Activated B cell treated with CpG ODN at 0.5 μM for 24 hours (primary cell): ENCODE measurements at regions of chr4 and their contacts with region 1.

Region 1: GRCh38 chr4:6783053-6783981 is 790 bp downstream of the KIAA0232 start:
- DNase-seq: peak; percentile 88
- ATAC-seq: peak; percentile 67
- H3K4me3 Mint-ChIP-seq: peak overlapping the region; percentile 84
- H3K27ac Mint-ChIP-seq: peak overlapping the region; percentile 78
- H3K4me1 Mint-ChIP-seq: peaks cover 22% of the 10 kb centered on the region
- H3K27me3 Mint-ChIP-seq: no peaks in the 10 kb centered on the region
- CTCF ChIP-seq: no peak

Region 2: GRCh38 chr4:6574747-6575502 is 208.4 kb before region 1 on chr4 and contains the start of gene MAN2B2:
- CTCF ChIA-PET with region 1: no interaction called
- POLR2A ChIA-PET with region 1: interaction called, 7 read pairs
- intact Hi-C with region 1: loop called (anchors 2 kb)
- DNase-seq: peak; percentile 86
- ATAC-seq: peak; percentile 96
- H3K4me3 Mint-ChIP-seq: peak within 1 kb of the TSS; percentile 88
- H3K27ac Mint-ChIP-seq: peak within 1 kb of the TSS; percentile 74
- H3K4me1 Mint-ChIP-seq: peaks cover 14% of the 10 kb centered on the region
- H3K27me3 Mint-ChIP-seq: no peaks in the 10 kb centered on the region
- CTCF ChIP-seq: no peak
- total RNA-seq, gene MAN2B2: 24.2 and 24.7 TPM in 2 replicates

Region 3: GRCh38 chr4:6709230-6710114 is 73.8 kb before region 1 on chr4 and contains the start of gene MRFAP1L1:
- CTCF ChIA-PET with region 1: no interaction called
- POLR2A ChIA-PET with region 1: interaction called, 9 read pairs
- intact Hi-C with region 1: loop called (anchors 1 kb)
- DNase-seq: peak; percentile 93
- ATAC-seq: peak; percentile 84
- H3K4me3 Mint-ChIP-seq: peak within 1 kb of the TSS; percentile 99
- H3K27ac Mint-ChIP-seq: peak within 1 kb of the TSS; percentile 96
- H3K4me1 Mint-ChIP-seq: peaks cover 64% of the 10 kb centered on the region
- H3K27me3 Mint-ChIP-seq: peaks cover 3% of the 10 kb centered on the region
- CTCF ChIP-seq: no peak
- total RNA-seq, gene MRFAP1L1: 39.1 and 39.5 TPM in 2 replicates

Region 4: GRCh38 chr4:6873792-6874461 is 90.6 kb after region 1 on chr4:
- CTCF ChIA-PET with region 1: interaction called, 9 read pairs
- POLR2A ChIA-PET with region 1: no interaction called
- intact Hi-C with region 1: loop called (anchors 1 kb)
- DNase-seq: peak; percentile 50
- ATAC-seq: peak; percentile 74
- H3K4me3 Mint-ChIP-seq: no peak overlapping the region
- H3K27ac Mint-ChIP-seq: no peak overlapping the region
- H3K4me1 Mint-ChIP-seq: peaks cover 12% of the 10 kb centered on the region
- H3K27me3 Mint-ChIP-seq: no peaks in the 10 kb centered on the region
- CTCF ChIP-seq: no peak

Region 5: DNA sequence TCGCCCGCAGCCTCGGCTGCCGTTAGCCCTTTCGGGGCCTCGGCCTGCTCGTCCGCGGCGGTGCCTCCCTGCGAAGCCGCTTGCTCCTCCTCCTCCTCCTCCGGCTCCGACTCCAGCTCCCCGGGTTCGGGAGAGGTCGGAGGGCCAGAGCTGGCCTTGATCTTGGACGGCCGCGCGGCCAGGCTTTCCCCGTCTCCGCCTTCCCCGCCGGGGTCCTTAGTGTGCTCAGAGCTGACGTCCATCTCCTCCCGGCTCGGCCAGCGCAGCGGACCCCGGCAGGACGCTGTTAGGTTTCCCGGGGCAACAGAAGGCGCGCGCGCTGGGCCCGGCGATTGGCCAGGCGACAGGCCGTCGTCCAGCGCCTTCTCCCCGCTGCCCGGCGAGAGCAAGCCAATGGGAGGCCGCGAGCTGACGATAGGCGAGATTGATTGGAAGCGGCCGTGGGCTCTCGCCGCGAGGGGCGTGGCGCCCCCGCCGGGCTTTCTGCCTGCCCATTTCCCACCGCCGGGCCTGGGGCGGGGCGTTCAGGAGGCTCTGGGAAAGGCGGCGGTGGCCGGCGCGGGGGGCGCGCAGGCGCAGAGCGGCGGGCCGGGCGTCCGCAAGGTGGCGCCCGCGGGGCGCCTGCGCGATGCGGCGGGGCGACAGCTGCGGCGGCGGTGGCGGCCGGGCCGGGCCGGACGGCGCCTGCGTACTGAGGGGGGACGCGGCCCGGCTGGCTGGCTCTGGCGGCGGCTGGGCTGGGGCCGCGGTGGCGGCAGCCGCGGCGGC is 259.6 kb after region 1 on chr4 and contains the start of gene TADA2B:
- CTCF ChIA-PET with region 1: no interaction called
- POLR2A ChIA-PET with region 1: no interaction called
- intact Hi-C with region 1: loop called (anchors 1 kb)
- DNase-seq: peak; percentile 96
- ATAC-seq: peak; percentile 87
- H3K4me3 Mint-ChIP-seq: peak within 1 kb of the TSS; percentile 93
- H3K27ac Mint-ChIP-seq: peak within 1 kb of the TSS; percentile 85
- H3K4me1 Mint-ChIP-seq: peaks cover 54% of the 10 kb centered on the region
- H3K27me3 Mint-ChIP-seq: no peaks in the 10 kb centered on the region
- CTCF ChIP-seq: no peak
- total RNA-seq, gene TADA2B: 26.7 and 31.8 TPM in 2 replicates